ENCODE measurements at regions of chr12 and their contacts with region 1.

Region 1: DNA sequence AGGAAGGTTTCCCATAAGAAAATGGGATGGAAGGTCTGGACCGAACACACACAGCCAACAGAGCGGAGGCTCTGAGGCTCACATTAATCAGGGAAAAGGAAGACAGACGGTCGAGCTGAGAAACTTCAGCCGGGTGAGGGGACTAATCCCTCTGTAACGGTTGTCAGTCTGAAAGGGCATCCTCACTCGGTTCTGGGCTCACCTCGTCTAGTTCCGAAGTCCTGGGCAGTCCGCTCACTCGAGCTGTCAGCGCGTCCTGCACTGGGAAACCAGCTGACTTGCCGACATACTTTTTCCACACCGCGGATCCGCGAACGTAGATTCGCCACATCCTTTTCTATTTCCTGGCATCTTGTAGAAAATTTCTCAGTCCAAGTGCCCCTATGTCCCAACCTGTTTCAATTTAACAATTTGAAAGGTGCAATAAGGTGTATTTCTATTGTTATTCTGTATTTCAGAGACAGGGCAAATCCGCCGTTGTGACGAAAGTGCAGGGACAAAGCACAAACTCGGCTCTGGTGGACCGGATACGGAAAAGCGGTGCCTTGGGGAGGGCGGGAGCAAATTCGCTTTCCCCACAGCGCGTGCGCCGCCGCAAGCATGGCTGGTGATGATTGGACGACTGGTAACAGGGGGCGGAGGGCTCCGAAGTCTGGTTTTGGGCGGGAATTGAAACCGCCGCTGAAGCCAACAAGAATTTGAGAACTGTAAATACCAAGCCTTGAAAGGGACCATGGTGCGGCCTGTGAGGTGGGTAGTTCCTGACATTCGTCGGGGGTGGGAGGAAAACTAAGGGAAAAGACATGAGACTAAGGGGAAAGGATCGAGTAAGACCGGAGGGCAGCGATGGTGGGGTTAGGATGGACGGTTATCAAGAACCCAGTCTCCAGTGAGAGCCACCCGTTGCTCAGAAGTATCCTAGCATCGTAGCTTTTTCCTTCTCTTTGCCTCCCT is at the start of gene RAD51AP1:
- DNase-seq: peak; percentile 94
- H3K4me3 Mint-ChIP-seq: peak within 1 kb of the TSS; percentile 99
- H3K27ac Mint-ChIP-seq: peak within 1 kb of the TSS; percentile 98
- H3K4me1 Mint-ChIP-seq: peaks cover 28% of the 10 kb centered on the region
- H3K27me3 Mint-ChIP-seq: no peaks in the 10 kb centered on the region
- total RNA-seq, gene RAD51AP1: 31.0 and 34.1 TPM in 2 replicates

Region 2: GRCh38 chr12:3973978-3974644 is 564.4 kb before region 1 on chr12:
- intact Hi-C with region 1: loop called (anchors 1 kb)
- DNase-seq: no peak
- H3K4me3 Mint-ChIP-seq: peak overlapping the region; percentile 30
- H3K27ac Mint-ChIP-seq: peak overlapping the region; percentile 84
- H3K4me1 Mint-ChIP-seq: peaks cover 63% of the 10 kb centered on the region
- H3K27me3 Mint-ChIP-seq: peaks cover 2% of the 10 kb centered on the region

Region 3: DNA sequence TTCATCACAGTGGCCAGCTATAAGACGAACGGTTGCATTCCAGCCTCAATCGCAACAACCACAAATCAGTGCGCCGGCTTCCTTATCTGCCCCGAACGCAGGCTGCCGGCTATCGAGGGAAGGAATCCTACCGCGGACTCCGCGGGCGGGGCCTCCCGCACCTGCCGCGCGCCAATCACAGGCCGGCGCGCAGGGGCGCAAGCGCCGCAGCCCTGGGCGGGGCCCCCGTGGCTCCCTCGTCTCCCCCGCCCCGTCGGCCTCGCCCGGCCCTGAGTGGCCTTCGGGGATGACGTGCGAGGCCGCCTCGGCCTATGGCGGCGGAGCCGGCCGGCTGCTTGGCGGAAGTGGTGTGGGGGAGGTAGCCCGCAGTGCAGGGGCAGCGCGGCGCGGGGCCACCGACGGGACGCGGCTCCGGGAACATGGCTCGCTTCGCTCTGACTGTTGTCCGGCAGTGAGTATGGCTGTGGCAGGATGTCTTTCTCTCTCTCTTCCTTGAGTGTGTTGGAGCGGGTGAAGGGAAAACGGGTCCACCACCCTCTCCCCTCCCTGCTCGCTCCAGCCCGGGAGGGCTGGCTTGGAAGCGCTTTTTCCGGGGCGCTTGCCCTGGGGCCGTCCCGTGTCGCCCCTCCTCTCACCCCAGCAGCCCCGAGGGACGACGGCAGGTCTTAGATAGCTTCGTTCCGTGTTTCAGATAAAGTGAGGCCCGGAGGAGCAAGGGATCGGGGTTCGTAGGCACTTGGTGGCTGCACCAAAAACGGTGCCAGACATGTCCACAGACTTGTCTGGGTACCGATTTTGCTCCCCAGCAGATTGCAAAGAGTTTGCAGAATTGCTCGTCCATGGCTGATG is 217.4 kb before region 1 on chr12 and contains the start of gene TIGAR:
- intact Hi-C with region 1: loop called (anchors 1 kb)
- DNase-seq: peak; percentile 92
- H3K4me3 Mint-ChIP-seq: peak within 1 kb of the TSS; percentile 93
- H3K27ac Mint-ChIP-seq: peak within 1 kb of the TSS; percentile 76
- H3K4me1 Mint-ChIP-seq: peaks cover 35% of the 10 kb centered on the region
- H3K27me3 Mint-ChIP-seq: no peaks in the 10 kb centered on the region
- total RNA-seq, gene TIGAR: 8.7 and 9.5 TPM in 2 replicates

Region 4: DNA sequence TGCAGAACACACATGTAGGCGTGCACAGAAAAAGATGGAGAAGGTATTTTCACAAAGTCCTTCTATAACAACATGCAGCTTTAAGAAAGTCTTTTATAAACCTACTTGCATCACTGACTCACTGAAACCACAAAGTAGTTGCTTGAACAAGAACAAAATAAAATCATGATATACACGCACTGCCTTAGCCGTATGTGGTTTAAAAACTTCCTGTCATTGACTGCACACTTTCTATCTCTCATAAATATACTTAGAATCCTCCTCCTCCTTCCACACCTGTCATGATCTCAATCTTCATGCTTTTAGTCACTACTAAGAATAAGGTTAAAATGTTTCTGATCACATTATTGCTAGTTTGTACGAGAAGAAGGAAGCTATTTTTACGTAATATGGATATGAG is 31.6 kb before region 1 on chr12:
- intact Hi-C with region 1: loop called (anchors 2 kb)
- DNase-seq: peak; percentile 26
- H3K4me3 Mint-ChIP-seq: peak overlapping the region; percentile 31
- H3K27ac Mint-ChIP-seq: peak overlapping the region; percentile 35
- H3K4me1 Mint-ChIP-seq: peaks cover 26% of the 10 kb centered on the region
- H3K27me3 Mint-ChIP-seq: no peaks in the 10 kb centered on the region

Region 5: GRCh38 chr12:4719821-4720636 is 181.5 kb after region 1 on chr12 and contains the start of gene GALNT8:
- intact Hi-C with region 1: no loop called
- DNase-seq: no peak
- H3K4me3 Mint-ChIP-seq: no peak within 1 kb of the TSS
- H3K27ac Mint-ChIP-seq: no peak within 1 kb of the TSS
- H3K4me1 Mint-ChIP-seq: no peaks in the 10 kb centered on the region
- H3K27me3 Mint-ChIP-seq: peaks cover 37% of the 10 kb centered on the region
- total RNA-seq, gene GALNT8: 1.2 and 1.4 TPM in 2 replicates